ENCODE measurements at regions of chr2 and their contacts with region 1.

Region 1: DNA sequence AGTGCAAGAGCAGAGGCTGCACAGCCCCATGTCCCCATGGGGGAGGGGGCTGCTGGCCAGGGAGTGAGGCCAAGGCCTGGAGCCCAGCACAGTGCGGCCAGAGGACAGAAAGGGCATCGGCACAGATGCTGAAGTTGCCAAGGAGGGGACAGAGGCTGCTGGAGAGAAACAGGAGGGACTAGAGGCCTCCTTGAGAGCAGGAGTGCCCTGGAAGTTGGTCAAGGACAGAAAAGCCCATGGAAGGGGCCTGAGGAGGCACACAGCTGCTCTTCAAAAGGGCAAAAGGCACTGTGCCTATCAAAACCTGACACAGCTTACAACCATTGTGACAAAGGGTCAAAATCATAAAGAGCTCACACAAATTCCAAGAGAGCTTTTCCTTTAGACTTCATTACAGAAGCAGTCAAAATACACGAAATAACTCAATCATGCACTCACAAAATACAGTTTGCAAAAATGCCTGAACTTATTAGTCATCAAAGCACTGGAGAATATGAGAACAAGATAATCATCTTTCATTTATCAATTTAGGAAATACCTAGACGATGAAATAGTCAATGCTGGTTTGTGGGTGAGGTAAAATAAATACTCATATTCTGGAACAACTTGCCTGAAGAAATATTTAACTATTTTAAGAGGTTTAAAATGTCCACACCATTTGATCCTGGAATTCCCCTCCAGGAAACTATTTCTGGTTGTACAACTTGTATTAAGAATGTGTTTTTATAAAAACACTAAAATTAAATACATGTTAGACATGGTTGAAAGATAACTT is 79.6 kb downstream of the USP40 start:
- DNase-seq: no peak
- H3K4me3 ChIP-seq: no peak overlapping the region
- H3K27ac ChIP-seq: peak overlapping the region; percentile 82 to 86
- H3K4me1 ChIP-seq: peaks cover 7 to 43% of the 10 kb centered on the region in 2 donors
- H3K27me3 ChIP-seq: no peaks in the 10 kb centered on the region
- CTCF ChIP-seq: no peak

Region 2: GRCh38 chr2:233404222-233404621 is 82.7 kb before region 1 on chr2:
- intact Hi-C with region 1: no loop called
- DNase-seq: peak in 1 of 2 donors; percentile 63
- H3K4me3 ChIP-seq: no peak overlapping the region
- H3K27ac ChIP-seq: no peak overlapping the region
- H3K4me1 ChIP-seq: peaks cover 8 to 12% of the 10 kb centered on the region in 2 donors
- H3K27me3 ChIP-seq: no peaks in the 10 kb centered on the region
- CTCF ChIP-seq: peak in 2 of 3 experiments; percentile 63 to 68

Region 3: DNA sequence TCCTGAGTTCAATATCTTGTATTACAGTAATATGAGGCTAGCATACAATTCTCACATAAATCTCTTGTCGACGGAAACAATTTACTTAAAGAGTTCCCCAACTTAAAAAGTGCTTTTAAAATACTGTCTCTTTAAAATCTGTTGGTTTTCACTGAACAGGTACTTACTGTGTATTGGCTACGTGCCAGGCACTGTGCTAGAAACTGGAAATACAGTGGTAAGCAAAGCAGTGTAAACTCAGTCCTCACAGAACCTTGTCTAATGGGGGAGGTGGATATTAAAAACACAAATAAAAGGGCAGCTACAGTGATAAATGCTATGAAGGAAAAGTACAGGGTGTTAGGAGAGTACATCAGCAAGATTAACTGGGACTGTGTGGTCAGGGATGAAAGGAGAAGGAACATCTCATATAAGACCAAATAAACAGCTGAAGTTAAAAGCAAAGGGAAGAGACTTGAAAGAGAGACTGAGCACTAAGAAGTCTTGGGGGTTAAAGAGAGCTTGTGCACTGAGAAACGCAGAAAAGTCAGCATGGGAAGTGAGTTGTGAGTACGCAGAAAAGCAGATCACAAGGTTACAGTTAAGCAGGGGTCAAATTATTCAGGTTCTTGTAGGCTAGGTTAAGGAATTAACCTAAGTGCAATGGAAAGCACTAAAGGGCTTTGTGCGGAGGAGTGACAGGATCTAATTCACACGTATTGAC is 27.1 kb after region 1 on chr2:
- intact Hi-C with region 1: no loop called
- DNase-seq: no peak
- H3K4me3 ChIP-seq: no peak overlapping the region
- H3K27ac ChIP-seq: no peak overlapping the region
- H3K4me1 ChIP-seq: no peaks in the 10 kb centered on the region
- H3K27me3 ChIP-seq: no peaks in the 10 kb centered on the region
- CTCF ChIP-seq: no peak

Region 4: GRCh38 chr2:233566141-233566960 is 79.4 kb after region 1 on chr2 and contains the start of gene USP40:
- intact Hi-C with region 1: loop called (anchors 5 kb)
- DNase-seq: peak; percentile 54 to 93
- H3K4me3 ChIP-seq: peak within 1 kb of the TSS; percentile 84 to 95
- H3K27ac ChIP-seq: peak within 1 kb of the TSS; percentile 91 to 92
- H3K4me1 ChIP-seq: peaks cover 0 to 5% of the 10 kb centered on the region in 2 donors
- H3K27me3 ChIP-seq: no peaks in the 10 kb centered on the region
- CTCF ChIP-seq: no peak
- total RNA-seq, gene USP40: 42.7 TPM

Measured in ascending aorta (tissue), 2 donors.